Transverse colon (tissue), 4 donors: ENCODE measurements at regions of chr17 and their contacts with region 1.

Region 1: GRCh38 chr17:45277216-45277849 is 15.4 kb upstream of the SPATA32 start:
- DNase-seq: peak; percentile 94
- H3K4me3 ChIP-seq: no peak overlapping the region
- H3K27ac ChIP-seq: peak overlapping the region; percentile 44 to 83 (median 72)
- H3K4me1 ChIP-seq: peaks cover 9 to 30% (median 14%) of the 10 kb centered on the region in 4 donors
- H3K27me3 ChIP-seq: no peaks in the 10 kb centered on the region
- CTCF ChIP-seq: peak; percentile 75 to 94 (median 82)
- EP300 ChIP-seq: no peak
- POLR2A ChIP-seq: no peak

Region 2: GRCh38 chr17:45218895-45219661 is 58.3 kb before region 1 on chr17:
- in situ Hi-C with region 1: no loop called
- intact Hi-C with region 1: no loop called
- DNase-seq: peak; percentile 90
- H3K4me3 ChIP-seq: no peak overlapping the region
- H3K27ac ChIP-seq: no peak overlapping the region
- H3K4me1 ChIP-seq: peaks cover 0 to 13% (median 6%) of the 10 kb centered on the region in 4 donors
- H3K27me3 ChIP-seq: peaks cover 29% of the 10 kb centered on the region
- CTCF ChIP-seq: peak; percentile 93 to 98 (median 95)
- EP300 ChIP-seq: no peak
- POLR2A ChIP-seq: no peak

Region 3: DNA sequence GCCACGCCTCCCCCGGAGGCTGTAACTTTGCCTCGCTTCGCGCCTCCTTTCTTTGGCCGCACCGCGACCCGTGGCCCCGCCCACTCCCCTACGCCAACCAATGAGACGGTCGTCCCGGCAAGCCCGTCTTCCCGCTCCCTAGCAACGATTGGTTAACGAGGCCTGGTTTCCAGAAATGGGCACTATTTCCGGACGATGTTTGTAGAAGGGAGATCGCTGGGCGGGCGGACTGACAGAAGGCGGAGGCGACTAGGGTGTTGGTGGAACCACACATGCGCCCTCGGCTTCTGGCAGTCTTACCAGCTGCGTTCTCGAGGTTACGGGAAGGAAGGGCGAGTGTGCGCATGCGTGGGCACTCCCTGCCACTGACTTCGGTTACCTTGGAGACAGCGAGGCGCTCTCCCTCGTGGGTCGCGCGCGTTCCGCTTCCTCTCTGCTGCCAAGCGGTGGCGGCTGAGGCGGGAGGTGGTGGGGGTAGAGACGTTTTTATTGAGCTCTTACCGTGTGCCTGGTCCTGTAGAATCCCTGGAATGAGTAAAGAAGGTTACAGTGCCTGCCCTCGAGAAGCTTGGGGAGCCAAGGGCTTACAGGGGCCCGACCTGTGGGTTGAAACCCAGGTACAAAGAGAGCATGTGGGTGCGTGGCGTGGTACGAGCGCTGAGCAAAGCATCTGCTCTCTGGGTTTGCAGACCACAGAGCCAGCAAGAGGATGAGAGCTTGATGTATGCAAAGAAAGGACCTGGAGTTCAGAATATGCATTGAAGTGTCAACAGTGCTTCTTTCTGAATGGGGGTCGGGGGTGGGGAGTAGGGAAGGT is 40.0 kb after region 1 on chr17:
- in situ Hi-C with region 1: no loop called
- intact Hi-C with region 1: loop called (anchors 5 kb)
- DNase-seq: peak; percentile 100
- H3K4me3 ChIP-seq: peak overlapping the region; percentile 22 to 90 (median 64)
- H3K27ac ChIP-seq: peak overlapping the region; percentile 99 to 100 (median 100)
- H3K4me1 ChIP-seq: peaks cover 36 to 86% (median 77%) of the 10 kb centered on the region in 4 donors
- H3K27me3 ChIP-seq: no peaks in the 10 kb centered on the region
- CTCF ChIP-seq: peak in 1 of 5 experiments; percentile 18
- EP300 ChIP-seq: no peak
- POLR2A ChIP-seq: peak; percentile 19

Region 4: GRCh38 chr17:45376171-45377005 is 99.1 kb after region 1 on chr17:
- in situ Hi-C with region 1: loop called (anchors 5 to 10 kb)
- intact Hi-C with region 1: no loop called
- DNase-seq: no peak
- H3K4me3 ChIP-seq: no peak overlapping the region
- H3K27ac ChIP-seq: no peak overlapping the region
- H3K4me1 ChIP-seq: peaks cover 3 to 17% (median 10%) of the 10 kb centered on the region in 4 donors
- H3K27me3 ChIP-seq: no peaks in the 10 kb centered on the region
- CTCF ChIP-seq: no peak
- EP300 ChIP-seq: no peak
- POLR2A ChIP-seq: no peak